Activated CD8-positive, alpha-beta T cell treated with anti-CD3 and anti-CD28 coated beads for 36 hours (primary cell): ENCODE measurements at regions of chr9 and their contacts with region 1.

Region 1: DNA sequence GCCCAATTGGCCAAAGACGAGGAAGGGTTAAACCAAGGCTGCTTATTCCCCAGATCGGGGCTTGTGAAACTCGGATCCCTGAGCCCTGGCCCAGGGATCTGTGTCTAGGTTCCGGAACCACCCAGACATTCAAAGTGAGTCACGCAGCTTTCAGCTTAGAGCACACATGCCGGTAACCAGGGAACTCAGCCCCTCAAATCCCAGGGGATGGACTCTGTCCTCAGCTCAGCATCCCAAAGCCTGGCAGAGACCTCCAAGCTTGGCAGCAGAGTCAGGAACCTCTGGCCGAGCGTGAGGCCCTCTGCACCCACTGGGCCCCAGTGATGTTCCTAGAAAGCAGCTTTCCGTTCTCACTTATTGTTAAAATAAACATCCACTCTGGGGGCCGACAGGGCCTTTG is 5.1 kb downstream of the PNPLA7 start:
- DNase-seq: no peak
- ATAC-seq: no peak
- H3K4me3 Mint-ChIP-seq: no peak overlapping the region
- H3K27ac Mint-ChIP-seq: no peak overlapping the region
- H3K4me1 Mint-ChIP-seq: peaks cover 8% of the 10 kb centered on the region
- H3K27me3 Mint-ChIP-seq: no peaks in the 10 kb centered on the region
- CTCF ChIP-seq: no peak

Region 2: GRCh38 chr9:137534256-137535117 is 10.6 kb before region 1 on chr9:
- CTCF ChIA-PET with region 1: interaction called, 12 read pairs
- POLR2A ChIA-PET with region 1: no interaction called
- intact Hi-C with region 1: no loop called
- DNase-seq: peak; percentile 49
- ATAC-seq: peak; percentile 74
- H3K4me3 Mint-ChIP-seq: no peak overlapping the region
- H3K27ac Mint-ChIP-seq: peak overlapping the region; percentile 67
- H3K4me1 Mint-ChIP-seq: peaks cover 25% of the 10 kb centered on the region
- H3K27me3 Mint-ChIP-seq: no peaks in the 10 kb centered on the region
- CTCF ChIP-seq: peak; percentile 67